Ascending aorta (tissue), 2 donors: ENCODE measurements at regions of chr5 and their contacts with region 1.

Region 1: DNA sequence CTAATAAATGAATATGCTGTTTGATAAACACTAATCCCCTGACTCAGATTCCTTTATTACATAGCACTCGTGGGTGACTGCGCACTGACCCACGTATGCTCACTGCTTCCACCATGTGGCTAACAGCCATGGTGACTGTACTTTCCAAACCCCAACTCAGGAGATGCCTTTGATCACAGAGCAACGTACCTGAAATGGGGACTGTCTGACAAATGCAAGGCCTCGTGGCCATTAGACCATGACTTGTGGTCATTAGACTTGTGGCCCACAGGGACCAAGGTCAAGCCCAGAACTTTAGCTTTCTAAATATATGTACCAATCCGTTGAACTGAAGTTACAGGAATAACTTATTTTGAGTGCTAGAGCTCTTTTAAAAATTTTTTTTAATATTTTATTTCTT is 46.6 kb downstream of the CYFIP2 start:
- DNase-seq: no peak
- H3K4me3 ChIP-seq: no peak overlapping the region
- H3K27ac ChIP-seq: no peak overlapping the region
- H3K4me1 ChIP-seq: no peaks in the 10 kb centered on the region
- H3K27me3 ChIP-seq: no peaks in the 10 kb centered on the region
- CTCF ChIP-seq: peak; percentile 34 to 58 (median 36)

Region 2: DNA sequence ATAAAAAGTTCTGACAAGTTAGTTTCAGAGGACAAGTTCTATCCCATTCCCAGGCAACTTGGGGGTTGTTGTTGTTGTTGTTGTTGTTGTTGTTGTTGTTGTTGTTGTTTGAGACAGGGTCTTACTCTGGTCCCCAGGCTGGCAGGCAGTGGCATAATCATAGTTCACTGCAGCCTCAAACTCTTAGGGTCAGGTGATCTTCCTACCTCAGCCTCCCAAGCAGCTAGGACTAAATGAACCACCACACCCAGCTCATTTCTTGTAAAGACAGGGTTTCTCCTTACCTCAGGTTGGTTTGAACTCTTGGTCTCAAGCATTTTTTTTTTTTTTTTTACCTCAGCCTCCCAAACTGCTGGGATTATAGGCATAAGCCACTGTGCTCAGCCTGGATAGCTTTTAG is 447.1 kb before region 1 on chr5:
- intact Hi-C with region 1: no loop called
- DNase-seq: no peak
- H3K4me3 ChIP-seq: no peak overlapping the region
- H3K27ac ChIP-seq: no peak overlapping the region
- H3K4me1 ChIP-seq: no peaks in the 10 kb centered on the region
- H3K27me3 ChIP-seq: no peaks in the 10 kb centered on the region
- CTCF ChIP-seq: no peak

Region 3: DNA sequence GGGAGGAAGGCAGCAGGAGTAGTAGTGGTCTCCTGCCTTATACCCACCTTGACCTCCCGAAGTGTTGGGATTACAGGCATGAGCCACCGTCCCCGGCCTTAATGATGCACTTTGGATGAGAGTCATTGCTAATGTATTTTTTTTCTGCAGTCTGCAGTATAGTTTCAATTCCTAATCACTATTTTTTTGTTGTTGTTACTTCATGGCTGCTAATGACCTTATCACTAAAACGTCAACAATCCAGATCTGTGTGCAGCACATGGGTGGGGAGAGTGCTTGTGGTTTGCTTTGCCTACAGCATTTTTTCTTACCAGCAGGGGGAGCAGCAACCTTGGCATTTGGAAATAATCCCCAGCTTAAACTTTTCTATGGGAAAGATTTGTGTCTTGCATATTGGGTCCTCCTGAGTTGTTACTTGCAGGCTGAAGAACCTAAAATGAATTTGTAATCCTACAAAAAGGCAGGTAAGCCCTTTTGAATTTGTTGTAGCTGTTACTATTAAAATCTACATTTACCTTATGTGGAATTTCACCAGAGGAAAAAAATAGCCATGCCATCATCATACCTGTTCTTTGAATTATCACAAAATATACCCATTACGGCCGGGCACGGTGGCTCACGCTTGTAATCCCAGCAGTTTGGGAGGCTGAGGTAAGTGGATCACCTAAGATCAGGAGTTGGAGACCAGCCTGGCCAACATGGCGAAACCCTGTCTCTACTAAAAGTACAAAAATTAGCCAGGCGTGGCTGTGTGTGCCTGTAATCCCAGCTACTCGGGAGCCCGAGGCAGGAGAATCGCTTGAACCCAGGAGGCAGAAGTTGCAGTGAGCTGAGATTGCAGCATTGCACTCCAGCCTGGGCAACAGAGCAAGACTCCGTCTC is 163.5 kb before region 1 on chr5:
- intact Hi-C with region 1: loop called (anchors 5 kb)
- DNase-seq: peak in 1 of 2 donors; percentile 85
- H3K4me3 ChIP-seq: peak overlapping the region in 1 of 2 donors; percentile 48
- H3K27ac ChIP-seq: no peak overlapping the region
- H3K4me1 ChIP-seq: peaks cover under 1 to 8% of the 10 kb centered on the region in 2 donors
- H3K27me3 ChIP-seq: no peaks in the 10 kb centered on the region
- CTCF ChIP-seq: peak; percentile 64 to 88 (median 71)

Region 4: DNA sequence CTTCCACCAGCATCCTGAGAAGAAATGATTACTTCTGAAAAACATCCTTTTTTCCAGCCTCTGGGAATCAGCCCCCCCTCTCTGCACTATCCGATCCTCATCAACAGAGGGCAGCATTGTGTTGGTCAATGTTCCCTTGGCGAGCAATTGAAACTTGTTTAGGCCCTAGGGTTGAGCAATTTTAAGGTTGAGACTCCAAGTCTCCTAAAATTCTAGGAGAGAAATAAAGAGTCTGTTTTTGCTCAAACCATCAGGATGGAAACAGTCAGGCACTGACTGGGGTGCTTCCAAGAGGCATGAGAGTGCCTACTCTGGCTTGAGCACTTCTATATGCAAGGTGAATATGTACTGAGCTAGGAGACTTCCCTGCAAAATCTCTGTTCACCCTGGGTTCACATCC is 58.9 kb before region 1 on chr5:
- intact Hi-C with region 1: loop called (anchors 5 kb)
- DNase-seq: no peak
- H3K4me3 ChIP-seq: no peak overlapping the region
- H3K27ac ChIP-seq: no peak overlapping the region
- H3K4me1 ChIP-seq: no peaks in the 10 kb centered on the region
- H3K27me3 ChIP-seq: no peaks in the 10 kb centered on the region
- CTCF ChIP-seq: peak; percentile 65 to 89 (median 81)